Heart right ventricle (tissue), 16 donors: ENCODE measurements at regions of chr4 and their contacts with region 1.

Region 1: GRCh38 chr4:16890651-16891050 is 7.8 kb downstream of the LDB2 start:
- DNase-seq: no peak
- ATAC-seq: peak in 6 of 8 donors; percentile 43 to 69 (median 54)
- H3K4me3 ChIP-seq: peak overlapping the region in 1 of 10 donors; percentile 5
- H3K27ac ChIP-seq: peak overlapping the region; percentile 14 to 86 (median 76)
- H3K4me1 ChIP-seq: peaks cover 0 to 57% (median 30%) of the 10 kb centered on the region in 9 donors
- H3K27me3 ChIP-seq: no peaks in the 10 kb centered on the region
- CTCF ChIP-seq: no peak

Region 2: GRCh38 chr4:16858275-16858752 is 32.3 kb before region 1 on chr4:
- intact Hi-C with region 1: loop called in 2 of 10 experiments (anchors 2 to 5 kb)
- DNase-seq: peak in 1 of 2 donors; percentile 69
- ATAC-seq: peak; percentile 79 to 94 (median 88)
- H3K4me3 ChIP-seq: no peak overlapping the region
- H3K27ac ChIP-seq: peak overlapping the region; percentile 54 to 86 (median 78)
- H3K4me1 ChIP-seq: peaks cover 4 to 77% (median 24%) of the 10 kb centered on the region in 9 donors
- H3K27me3 ChIP-seq: no peaks in the 10 kb centered on the region
- CTCF ChIP-seq: no peak

Region 3: GRCh38 chr4:16864199-16864598 is 26.5 kb before region 1 on chr4:
- intact Hi-C with region 1: loop called in 3 of 10 experiments (anchors 2 to 5 kb)
- DNase-seq: no peak
- ATAC-seq: no peak
- H3K4me3 ChIP-seq: no peak overlapping the region
- H3K27ac ChIP-seq: peak overlapping the region in 9 of 10 donors; percentile 46 to 87 (median 71)
- H3K4me1 ChIP-seq: peaks cover 0 to 78% (median 23%) of the 10 kb centered on the region in 9 donors
- H3K27me3 ChIP-seq: no peaks in the 10 kb centered on the region
- CTCF ChIP-seq: no peak